ENCODE measurements at regions of chr11 and their contacts with region 1.

Region 1: GRCh38 chr11:765025-765801 is 12.1 kb downstream of the GATD1 start:
- DNase-seq: peak in 6 of 10 donors; percentile 56 to 95 (median 70)

Region 2: DNA sequence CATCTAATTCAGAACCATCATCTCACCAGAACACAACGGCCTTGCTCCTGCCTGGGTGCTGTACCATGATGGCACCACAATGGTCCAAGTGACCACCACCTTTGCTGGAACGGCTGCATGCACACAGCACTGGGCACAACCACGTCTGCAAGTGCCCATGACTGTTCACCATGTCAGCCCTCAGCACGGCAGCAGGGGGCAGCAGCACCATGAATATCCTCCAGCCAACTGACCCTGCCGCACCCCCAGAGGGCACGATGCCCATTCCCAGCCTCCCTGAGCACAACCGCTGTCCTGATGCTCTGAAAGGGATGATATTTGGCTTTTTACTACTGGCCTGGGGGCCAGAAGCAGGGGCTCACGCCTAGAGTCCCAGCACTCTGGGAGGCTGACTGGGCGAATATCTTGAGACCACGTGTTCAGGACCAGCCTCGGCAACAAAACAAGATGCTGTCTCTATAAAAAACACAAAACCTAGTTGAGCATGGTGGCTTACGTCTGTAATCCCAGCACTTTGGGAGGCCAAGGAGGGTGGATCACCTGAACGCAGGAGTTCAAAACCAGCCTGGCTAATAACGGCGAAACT is 102.4 kb before region 1 on chr11:
- intact Hi-C with region 1: loop called (anchors 10 kb)
- DNase-seq: peak in 9 of 10 donors; percentile 49 to 95 (median 71)

Region 3: GRCh38 chr11:1390603-1391164 is 625.5 kb after region 1 on chr11:
- intact Hi-C with region 1: no loop called
- DNase-seq: peak in 7 of 10 donors; percentile 5 to 93 (median 67)